Mammary epithelial cell (primary cell): ENCODE measurements at regions of chr13 and their contacts with region 1.

Region 1: DNA sequence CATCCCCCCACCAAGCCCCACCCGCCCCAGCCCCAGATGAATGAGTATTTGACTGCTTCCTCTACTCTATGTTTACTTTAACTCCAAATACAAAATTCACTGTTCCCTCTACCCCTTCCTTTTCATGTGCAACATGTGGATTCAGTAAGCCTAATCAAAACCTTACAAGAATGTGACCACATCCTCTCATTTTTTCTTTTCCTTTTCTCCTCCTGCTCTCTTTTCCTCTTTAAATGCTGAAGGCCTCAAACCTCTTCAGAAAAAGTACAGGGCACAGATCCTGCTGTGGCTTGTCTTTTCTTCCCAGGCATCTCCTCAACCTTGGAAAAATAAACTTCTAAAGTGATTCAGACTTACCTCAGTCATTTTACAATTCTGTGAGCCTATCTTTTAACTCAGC is 119.0 kb downstream of the MYCBP2 start:
- DNase-seq: peak; percentile 82
- H3K4me3 ChIP-seq: no peak overlapping the region
- H3K27ac ChIP-seq: peak overlapping the region; percentile 13
- H3K4me1 ChIP-seq: peaks cover 9% of the 10 kb centered on the region
- H3K27me3 ChIP-seq: no peaks in the 10 kb centered on the region
- CTCF ChIP-seq: no peak

Region 2: DNA sequence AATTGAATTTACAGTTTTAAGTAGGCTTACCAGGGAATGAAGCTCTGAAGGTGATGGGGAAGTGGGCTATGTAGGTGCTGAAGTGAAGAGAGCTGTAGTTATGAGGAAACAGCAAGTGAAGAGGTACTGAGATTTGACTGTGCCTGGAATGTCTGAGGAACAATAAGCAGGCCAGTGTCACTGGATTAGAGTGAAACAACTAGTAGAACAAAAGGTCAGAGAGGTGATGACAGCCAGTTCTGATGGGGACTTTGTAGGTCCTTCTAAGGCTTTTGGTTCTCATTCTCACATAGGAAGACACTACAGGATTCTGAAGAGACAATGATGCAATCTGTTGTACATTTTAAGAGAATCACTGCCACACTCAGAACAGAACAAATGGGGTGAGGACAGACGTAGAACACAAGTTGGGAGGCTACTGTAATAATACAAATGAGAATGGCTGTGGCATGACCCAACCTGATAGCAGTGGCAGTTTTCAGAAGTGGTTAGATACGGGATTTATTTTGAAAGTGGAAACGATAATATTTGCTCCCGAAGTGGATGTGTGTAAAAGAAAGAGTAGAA is 11.8 kb before region 1 on chr13:
- CTCF ChIA-PET with region 1: no interaction called
- dilution Hi-C with region 1: no loop called
- in situ Hi-C with region 1: no loop called
- intact Hi-C with region 1: loop called (anchors 1 kb)
- DNase-seq: no peak
- H3K4me3 ChIP-seq: no peak overlapping the region
- H3K27ac ChIP-seq: no peak overlapping the region
- H3K4me1 ChIP-seq: no peaks in the 10 kb centered on the region
- H3K27me3 ChIP-seq: no peaks in the 10 kb centered on the region
- CTCF ChIP-seq: no peak